ENCODE measurements at regions of chr2 and their contacts with region 1.

Region 1: GRCh38 chr2:172836386-172836821 is 100.8 kb downstream of the RAPGEF4 start:
- DNase-seq: no peak
- H3K4me3 ChIP-seq: no peak overlapping the region
- CTCF ChIP-seq: no peak

Region 2: GRCh38 chr2:173210270-173211196 is 374.1 kb after region 1 on chr2:
- in situ Hi-C with region 1: loop called (anchors 25 kb)
- DNase-seq: peak; percentile 93
- H3K4me3 ChIP-seq: no peak overlapping the region
- CTCF ChIP-seq: peak; percentile 87

Measured in astrocyte of the cerebellum (primary cell).